ENCODE measurements at regions of chr2 and their contacts with region 1.

Region 1: GRCh38 chr2:197777823-197778407 is 7.2 kb downstream of the BOLL start:
- DNase-seq: peak; percentile 62
- H3K4me3 ChIP-seq: no peak overlapping the region
- H3K27ac ChIP-seq: no peak overlapping the region
- H3K4me1 ChIP-seq: peaks cover 6% of the 10 kb centered on the region
- H3K27me3 ChIP-seq: no peaks in the 10 kb centered on the region
- CTCF ChIP-seq: peak; percentile 77

Region 2: GRCh38 chr2:197113275-197113711 is 664.6 kb before region 1 on chr2:
- CTCF ChIA-PET with region 1: no interaction called
- POLR2A ChIA-PET with region 1: no interaction called
- intact Hi-C with region 1: loop called (anchors 10 kb)
- DNase-seq: peak; percentile 60
- H3K4me3 ChIP-seq: no peak overlapping the region
- H3K27ac ChIP-seq: peak overlapping the region; percentile 18
- H3K4me1 ChIP-seq: peaks cover 7% of the 10 kb centered on the region
- H3K27me3 ChIP-seq: no peaks in the 10 kb centered on the region
- CTCF ChIP-seq: peak; percentile 77

Region 3: DNA sequence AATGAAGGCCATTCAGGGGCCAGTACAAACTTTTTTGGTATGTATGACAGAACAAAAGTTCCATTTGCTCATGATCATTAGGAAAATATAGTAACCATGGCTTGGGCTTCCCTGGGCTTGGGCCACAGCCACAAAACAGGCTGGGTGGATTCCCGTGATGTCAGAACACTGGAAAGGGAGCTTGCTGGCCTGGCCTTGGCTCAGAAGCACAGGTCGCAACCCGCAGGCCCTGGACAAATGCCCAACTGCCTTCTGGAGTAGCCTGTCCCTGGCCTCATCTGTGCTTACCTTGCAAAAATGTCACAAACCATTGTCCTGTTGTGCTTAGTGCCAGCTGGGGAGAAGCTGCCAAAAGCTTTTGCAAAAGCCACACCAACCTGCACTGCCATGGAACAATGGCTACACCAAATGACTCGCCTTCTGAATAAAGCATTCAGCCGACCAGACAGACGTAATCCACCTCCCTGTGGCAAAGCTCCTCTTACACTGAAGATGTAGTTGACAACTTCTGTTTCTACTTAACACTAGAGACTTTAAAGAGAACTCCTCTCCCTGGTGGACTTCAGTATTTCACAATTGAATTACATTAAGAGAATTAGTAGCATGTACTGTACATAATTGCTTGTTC is 592.8 kb before region 1 on chr2:
- CTCF ChIA-PET with region 1: no interaction called
- POLR2A ChIA-PET with region 1: no interaction called
- intact Hi-C with region 1: loop called (anchors 10 kb)
- DNase-seq: peak; percentile 62
- H3K4me3 ChIP-seq: no peak overlapping the region
- H3K27ac ChIP-seq: peak overlapping the region; percentile 15
- H3K4me1 ChIP-seq: peaks cover 17% of the 10 kb centered on the region
- H3K27me3 ChIP-seq: no peaks in the 10 kb centered on the region
- CTCF ChIP-seq: no peak

Region 4: GRCh38 chr2:197425550-197425949 is 352.4 kb before region 1 on chr2:
- CTCF ChIA-PET with region 1: no interaction called
- POLR2A ChIA-PET with region 1: no interaction called
- intact Hi-C with region 1: loop called (anchors 10 kb)
- DNase-seq: no peak
- H3K4me3 ChIP-seq: no peak overlapping the region
- H3K27ac ChIP-seq: no peak overlapping the region
- H3K4me1 ChIP-seq: peaks cover 12% of the 10 kb centered on the region
- H3K27me3 ChIP-seq: no peaks in the 10 kb centered on the region
- CTCF ChIP-seq: no peak

Region 5: DNA sequence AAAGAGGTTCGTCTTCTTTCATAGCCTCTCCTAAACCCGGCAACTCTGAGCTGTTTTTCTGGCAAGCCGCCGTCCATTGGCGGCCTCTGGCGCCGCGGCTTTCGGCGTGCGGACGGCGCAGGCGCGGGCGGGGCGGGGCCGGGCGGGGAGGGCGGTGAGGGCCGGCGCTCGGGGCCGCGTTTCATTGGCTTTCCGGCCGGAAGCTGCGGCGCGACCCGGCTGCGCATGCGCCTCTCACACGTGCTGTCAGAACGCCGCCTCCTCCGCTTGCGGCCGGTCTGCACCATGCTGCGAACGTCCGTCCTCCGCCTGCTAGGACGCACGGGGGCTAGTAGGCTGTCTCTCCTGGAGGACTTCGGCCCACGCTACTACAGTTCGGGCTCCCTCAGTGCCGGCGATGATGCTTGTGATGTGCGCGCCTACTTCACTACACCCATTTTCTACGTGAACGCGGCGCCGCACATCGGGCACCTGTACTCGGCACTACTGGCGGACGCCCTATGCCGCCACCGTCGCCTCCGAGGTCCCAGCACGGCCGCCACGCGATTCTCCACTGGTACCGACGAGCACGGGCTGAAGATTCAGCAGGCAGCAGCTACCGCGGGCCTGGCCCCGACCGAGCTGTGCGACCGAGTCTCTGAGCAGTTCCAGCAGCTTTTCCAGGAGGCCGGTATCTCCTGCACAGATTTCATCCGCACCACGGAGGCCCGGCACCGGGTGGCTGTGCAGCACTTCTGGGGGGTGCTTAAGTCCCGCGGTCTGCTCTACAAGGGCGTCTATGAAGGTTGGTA is 72.6 kb before region 1 on chr2 and contains the start of gene MARS2:
- CTCF ChIA-PET with region 1: no interaction called
- POLR2A ChIA-PET with region 1: no interaction called
- intact Hi-C with region 1: loop called (anchors 2 kb)
- DNase-seq: peak; percentile 95
- H3K4me3 ChIP-seq: peak within 1 kb of the TSS; percentile 95
- H3K27ac ChIP-seq: peak within 1 kb of the TSS; percentile 87
- H3K4me1 ChIP-seq: peaks cover 7% of the 10 kb centered on the region
- H3K27me3 ChIP-seq: no peaks in the 10 kb centered on the region
- CTCF ChIP-seq: no peak
- total RNA-seq, gene MARS2: 13.2 and 14.6 TPM in 2 replicates